Activated CD4-positive, alpha-beta T cell treated with anti-CD3 and anti-CD28 coated beads, Interleukin-2, amount 10 ng/mL, durations not matched to agents 24 days and 14 days (primary cell): ENCODE measurements at regions of chr2 and their contacts with region 1.

Region 1: GRCh38 chr2:216371756-216372702 is at the start of gene MARCHF4:
- DNase-seq: peak; percentile 91
- H3K4me3 Mint-ChIP-seq: no peak within 1 kb of the TSS
- H3K27ac Mint-ChIP-seq: no peak within 1 kb of the TSS
- H3K4me1 Mint-ChIP-seq: peaks cover 6% of the 10 kb centered on the region
- H3K27me3 Mint-ChIP-seq: peaks cover 63% of the 10 kb centered on the region
- total RNA-seq, gene MARCHF4: not detected in 2 replicates

Region 2: GRCh38 chr2:216348756-216349308 is 23.2 kb before region 1 on chr2:
- intact Hi-C with region 1: loop called (anchors 2 kb)
- DNase-seq: no peak
- H3K4me3 Mint-ChIP-seq: no peak overlapping the region
- H3K27ac Mint-ChIP-seq: peak overlapping the region; percentile 78
- H3K4me1 Mint-ChIP-seq: peaks cover 62% of the 10 kb centered on the region
- H3K27me3 Mint-ChIP-seq: peaks cover 4% of the 10 kb centered on the region